ENCODE measurements at regions of chr6 and their contacts with region 1.

Region 1: DNA sequence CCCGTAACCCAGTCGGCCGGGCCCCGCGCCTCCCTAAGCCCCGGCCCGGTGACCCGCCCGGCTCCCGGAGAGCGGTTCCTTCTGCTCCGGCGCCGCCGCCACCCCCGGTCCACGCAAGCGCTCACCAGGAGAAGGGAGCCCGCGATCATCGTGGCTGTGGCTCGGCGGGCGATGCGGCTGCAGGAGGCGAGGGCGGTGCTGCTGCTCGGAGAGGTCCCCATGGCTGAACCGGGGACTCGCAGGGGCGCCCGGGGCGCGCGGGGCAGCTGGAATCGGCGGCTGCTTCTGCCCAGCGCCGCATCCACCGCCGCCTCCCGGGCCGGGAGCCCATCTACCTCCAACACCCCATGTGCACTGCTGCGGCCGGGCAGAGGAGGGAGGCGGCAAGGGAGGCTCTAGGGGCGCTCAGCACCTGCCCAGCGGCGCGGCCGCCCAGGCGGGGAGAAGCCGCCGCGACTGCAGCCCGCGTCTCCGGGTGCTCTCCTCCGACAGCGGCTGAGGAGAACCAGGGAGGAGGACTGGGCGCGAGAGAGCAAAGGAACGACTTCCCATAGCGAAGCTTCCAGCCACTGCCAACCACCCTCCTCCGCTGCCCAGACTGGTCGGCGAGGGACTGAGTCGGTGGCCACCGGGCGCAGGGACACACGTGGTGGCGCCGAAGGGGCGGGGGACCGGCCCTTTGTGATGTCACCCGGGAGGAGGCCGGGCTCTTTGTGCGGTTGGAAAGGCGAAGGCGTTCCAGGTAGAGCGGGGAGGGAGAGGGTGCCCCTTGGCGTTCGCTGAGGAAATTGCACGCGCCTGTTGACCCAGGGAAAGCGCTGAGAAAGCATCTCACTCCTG is at the start of gene TNFRSF21:
- DNase-seq: peak; percentile 92
- ATAC-seq: peak; percentile 96
- H3K4me3 ChIP-seq: peak within 1 kb of the TSS; percentile 93 to 98 (median 95)
- H3K27ac ChIP-seq: peak within 1 kb of the TSS; percentile 63
- H3K4me1 ChIP-seq: peaks cover 45% of the 10 kb centered on the region
- H3K27me3 ChIP-seq: peaks cover 0 to 24% of the 10 kb centered on the region in 2 experiments; a peak in 2 of 5 replicates
- CTCF ChIP-seq: peak; percentile 98
- EP300 ChIP-seq: peak in 1 of 2 experiments; percentile 17; a peak in 1 of 4 replicates
- POLR2A ChIP-seq: peak; percentile 95 to 96
- RAD21 ChIP-seq: peak; percentile 98
- total RNA-seq, gene TNFRSF21: 35.4 and 46.3 TPM in 2 replicates

Region 2: GRCh38 chr6:46862381-46862780 is 447.1 kb before region 1 on chr6:
- CTCF ChIA-PET with region 1: no interaction called
- POLR2A ChIA-PET with region 1: no interaction called
- in situ Hi-C with region 1: loop called (anchors 25 kb)
- intact Hi-C with region 1: no loop called
- DNase-seq: no peak
- ATAC-seq: no peak
- H3K4me3 ChIP-seq: no peak overlapping the region
- H3K27ac ChIP-seq: no peak overlapping the region
- H3K4me1 ChIP-seq: no peaks in the 10 kb centered on the region
- H3K27me3 ChIP-seq: peaks cover 0 to 10% of the 10 kb centered on the region in 2 experiments; a peak in 2 of 5 replicates
- CTCF ChIP-seq: no peak
- EP300 ChIP-seq: no peak
- POLR2A ChIP-seq: no peak
- RAD21 ChIP-seq: no peak

Region 3: GRCh38 chr6:47047479-47048407 is 261.8 kb before region 1 on chr6:
- CTCF ChIA-PET with region 1: interaction called, 5 read pairs
- POLR2A ChIA-PET with region 1: no interaction called
- in situ Hi-C with region 1: no loop called
- intact Hi-C with region 1: loop called (anchors 1 kb)
- DNase-seq: peak; percentile 95
- ATAC-seq: peak; percentile 97
- H3K4me3 ChIP-seq: peak overlapping the region in 1 of 3 experiments; percentile 26; a peak in 1 of 6 replicates
- H3K27ac ChIP-seq: no peak overlapping the region
- H3K4me1 ChIP-seq: peaks cover 28% of the 10 kb centered on the region
- H3K27me3 ChIP-seq: peaks cover 2 to 4% of the 10 kb centered on the region in 2 experiments; a peak in 2 of 5 replicates
- CTCF ChIP-seq: peak; percentile 96
- EP300 ChIP-seq: peak in 1 of 2 experiments; percentile 31; a peak in 1 of 4 replicates
- POLR2A ChIP-seq: no peak
- RAD21 ChIP-seq: peak; percentile 82

Region 4: GRCh38 chr6:47221565-47221964 is 87.9 kb before region 1 on chr6:
- CTCF ChIA-PET with region 1: no interaction called
- POLR2A ChIA-PET with region 1: no interaction called
- in situ Hi-C with region 1: no loop called
- intact Hi-C with region 1: no loop called
- DNase-seq: no peak
- ATAC-seq: no peak; the same call in 2 of the 3 replicates
- H3K4me3 ChIP-seq: no peak overlapping the region
- H3K27ac ChIP-seq: no peak overlapping the region
- H3K4me1 ChIP-seq: no peaks in the 10 kb centered on the region
- H3K27me3 ChIP-seq: no peaks in the 10 kb centered on the region
- CTCF ChIP-seq: no peak
- EP300 ChIP-seq: no peak
- POLR2A ChIP-seq: no peak
- RAD21 ChIP-seq: no peak

Region 5: DNA sequence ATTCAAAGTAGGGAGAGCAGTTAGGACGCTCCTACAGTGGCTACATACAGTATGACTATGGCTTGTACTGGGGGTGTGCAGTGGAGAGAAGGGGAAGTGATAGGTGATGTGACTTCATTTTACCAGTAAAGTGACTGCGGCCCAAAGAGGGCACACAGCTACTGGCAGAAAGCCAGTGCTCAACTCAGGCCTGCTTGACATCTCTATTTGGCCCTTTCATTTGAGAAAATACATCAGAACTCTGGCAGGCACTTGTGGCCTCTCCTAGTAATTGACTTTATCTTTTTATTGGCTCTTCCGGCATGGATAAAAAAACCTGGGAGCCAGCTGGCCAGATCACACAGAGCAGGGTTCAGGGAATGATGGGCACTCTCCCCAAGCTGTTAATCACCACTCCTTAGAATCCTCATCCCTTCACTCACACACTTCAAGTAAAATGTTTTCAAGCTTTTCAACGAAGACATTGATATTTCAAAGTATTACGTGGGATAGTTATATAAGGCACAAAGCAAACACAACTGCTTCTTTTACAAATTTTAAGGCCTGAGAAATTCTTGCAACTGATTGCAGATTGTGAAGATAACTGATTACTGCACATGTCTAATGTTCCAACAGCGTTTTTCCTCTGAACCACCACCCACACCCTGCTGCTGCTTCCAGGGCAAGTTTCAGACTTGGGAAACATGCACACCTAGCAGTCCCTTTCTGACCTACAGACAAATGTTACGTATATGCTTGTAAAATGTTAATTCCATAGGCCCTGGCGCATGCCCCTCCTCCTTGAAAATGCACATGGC is 73.3 kb before region 1 on chr6:
- CTCF ChIA-PET with region 1: no interaction called
- POLR2A ChIA-PET with region 1: no interaction called
- in situ Hi-C with region 1: loop called (anchors 5 kb)
- intact Hi-C with region 1: no loop called
- DNase-seq: no peak
- ATAC-seq: peak; percentile 28; the same call in 1 of the 3 replicates
- H3K4me3 ChIP-seq: no peak overlapping the region
- H3K27ac ChIP-seq: no peak overlapping the region
- H3K4me1 ChIP-seq: peaks cover 8% of the 10 kb centered on the region
- H3K27me3 ChIP-seq: no peaks in the 10 kb centered on the region
- CTCF ChIP-seq: no peak
- EP300 ChIP-seq: no peak
- POLR2A ChIP-seq: no peak
- RAD21 ChIP-seq: no peak

Region 6: GRCh38 chr6:47264775-47265184 is 44.7 kb before region 1 on chr6:
- CTCF ChIA-PET with region 1: no interaction called
- POLR2A ChIA-PET with region 1: no interaction called
- in situ Hi-C with region 1: no loop called
- intact Hi-C with region 1: loop called (anchors 5 kb)
- DNase-seq: no peak
- ATAC-seq: no peak
- H3K4me3 ChIP-seq: no peak overlapping the region
- H3K27ac ChIP-seq: no peak overlapping the region
- H3K4me1 ChIP-seq: peaks cover 17% of the 10 kb centered on the region
- H3K27me3 ChIP-seq: no peaks in the 10 kb centered on the region
- CTCF ChIP-seq: no peak
- EP300 ChIP-seq: no peak
- POLR2A ChIP-seq: no peak
- RAD21 ChIP-seq: no peak